Cardiac septum (tissue), 1 donor: ENCODE measurements at regions of chr9 and their contacts with region 1.

Region 1: GRCh38 chr9:34994260-34994899 is 4.8 kb downstream of the DNAJB5 start:
- DNase-seq: no peak

Region 2: DNA sequence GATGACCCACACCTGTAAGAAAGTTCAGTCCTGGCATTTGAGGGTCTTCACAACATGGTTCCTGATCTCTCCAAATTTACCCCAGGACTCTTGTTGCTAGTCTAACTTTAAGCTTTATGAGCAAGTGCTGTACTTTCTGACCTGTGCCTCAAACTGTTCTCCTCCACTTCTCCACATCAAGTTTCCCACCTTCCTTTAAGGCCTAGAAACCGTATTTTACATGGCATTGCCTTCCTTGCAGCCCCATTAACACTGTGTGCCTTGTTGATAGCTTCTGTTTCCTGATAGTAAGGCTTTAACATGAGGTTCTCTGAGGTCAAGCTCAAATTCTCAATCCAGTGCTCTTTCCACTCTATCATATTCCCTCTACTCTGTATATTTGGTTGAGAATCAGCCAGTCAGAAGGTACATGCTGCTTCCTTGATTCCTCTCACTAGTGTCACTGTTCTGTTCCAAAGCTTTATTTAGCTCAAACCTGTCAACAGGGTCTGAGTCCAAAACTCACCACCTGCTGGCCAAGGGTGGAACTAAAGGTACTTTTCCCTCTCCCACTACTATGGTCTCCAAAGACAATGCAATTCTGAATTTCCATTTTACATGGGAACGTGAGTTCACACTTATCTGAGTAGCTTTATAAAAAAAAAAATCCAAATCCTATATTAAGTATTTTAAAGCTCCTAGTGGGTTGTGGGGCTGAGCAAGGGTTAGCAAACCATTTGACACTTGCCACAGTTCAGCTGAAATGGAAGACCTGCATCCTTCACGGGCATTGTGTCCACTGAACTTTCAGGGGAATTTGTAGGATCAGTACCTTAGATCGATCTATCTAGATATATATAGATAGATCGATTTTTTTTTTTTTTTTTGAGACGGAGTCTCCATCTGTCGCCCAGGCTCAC is 56.9 kb after region 1 on chr9:
- intact Hi-C with region 1: loop called (anchors 5 kb)
- DNase-seq: no peak

Region 3: GRCh38 chr9:35071814-35072460 is 77.6 kb after region 1 on chr9:
- intact Hi-C with region 1: loop called (anchors 5 kb)
- DNase-seq: peak; percentile 94